ENCODE measurements at regions of chr5 and their contacts with region 1.

Region 1: DNA sequence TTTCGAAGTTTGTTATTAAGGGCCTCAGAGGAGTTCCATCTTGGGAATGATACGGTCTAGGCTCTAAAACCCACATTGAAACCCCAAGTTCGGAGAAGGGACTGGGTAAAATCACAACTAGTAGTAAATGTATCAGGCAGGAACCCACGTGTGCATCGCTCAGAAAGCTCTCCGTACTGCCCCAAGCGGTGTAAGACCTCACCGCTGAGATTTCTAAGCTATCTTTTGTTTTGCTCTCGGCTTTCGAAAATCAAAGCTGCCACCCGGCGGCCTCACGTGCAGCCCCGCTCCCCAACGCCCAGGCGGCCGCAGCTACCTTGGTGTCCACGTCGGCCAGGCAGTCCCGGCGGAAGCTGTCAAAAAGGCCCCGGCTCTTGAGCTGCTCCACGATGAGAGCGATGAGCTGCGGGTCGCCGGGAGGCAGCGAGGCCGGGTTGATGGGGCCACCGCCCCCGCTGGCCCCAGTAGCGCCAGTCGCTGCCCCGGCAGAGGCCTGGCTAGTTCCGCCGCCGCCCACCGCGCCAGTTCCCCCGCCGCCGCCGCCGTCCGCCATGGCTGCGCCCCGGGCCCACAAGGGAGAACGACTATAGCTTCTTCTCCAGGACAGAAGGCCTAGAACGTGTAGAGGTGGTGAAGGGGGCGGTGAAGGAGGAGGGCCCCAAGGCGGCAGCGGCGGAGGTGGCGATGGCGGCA is 420 bp downstream of the BOD1 start:
- DNase-seq: peak; percentile 31
- H3K4me3 ChIP-seq: peak overlapping the region; percentile 87
- CTCF ChIP-seq: peak; percentile 72

Region 2: DNA sequence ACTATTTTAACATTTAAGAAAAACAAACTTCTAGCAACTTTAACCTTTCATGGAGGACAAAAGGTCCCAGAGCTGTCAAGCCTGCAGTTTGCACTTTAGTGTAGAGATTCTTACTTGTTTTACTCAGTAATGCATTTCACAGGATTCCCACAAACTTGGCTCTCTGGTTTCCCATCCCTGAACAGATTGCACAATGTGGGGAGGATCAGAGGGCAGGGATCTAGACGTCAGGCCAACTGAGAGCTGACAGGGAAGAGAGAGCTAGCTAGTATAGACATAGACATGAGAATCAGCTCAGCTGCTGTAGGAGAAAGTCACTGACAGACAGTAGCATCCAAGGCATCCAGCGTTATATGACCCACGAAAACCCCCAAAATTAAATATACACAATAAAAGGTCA is 492.6 kb before region 1 on chr5:
- CTCF ChIA-PET with region 1: no interaction called
- POLR2A ChIA-PET with region 1: no interaction called
- DNase-seq: peak; percentile 31
- H3K4me3 ChIP-seq: no peak overlapping the region
- CTCF ChIP-seq: no peak

Region 3: DNA sequence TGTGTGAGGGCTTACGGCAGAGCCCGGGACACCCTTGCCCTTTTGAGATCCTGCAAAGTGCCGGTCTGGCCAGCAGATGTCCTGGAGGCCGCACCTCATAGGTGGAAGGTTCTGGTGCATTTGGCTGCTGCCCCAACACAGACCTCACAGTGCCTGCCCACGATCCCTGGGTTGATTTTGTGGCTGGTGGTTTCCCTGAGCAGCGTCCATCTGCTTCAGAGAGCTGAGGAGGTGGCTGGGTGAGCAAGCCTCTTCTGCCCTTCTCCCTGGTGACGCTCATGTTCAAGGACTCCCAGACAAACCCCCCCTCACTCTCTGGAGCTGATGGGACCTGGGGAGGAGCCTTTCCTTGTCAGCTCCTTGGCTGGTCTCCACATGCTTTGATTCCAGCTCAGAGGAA is 452.8 kb before region 1 on chr5:
- CTCF ChIA-PET with region 1: no interaction called
- POLR2A ChIA-PET with region 1: no interaction called
- DNase-seq: no peak
- H3K4me3 ChIP-seq: no peak overlapping the region
- CTCF ChIP-seq: no peak

Region 4: DNA sequence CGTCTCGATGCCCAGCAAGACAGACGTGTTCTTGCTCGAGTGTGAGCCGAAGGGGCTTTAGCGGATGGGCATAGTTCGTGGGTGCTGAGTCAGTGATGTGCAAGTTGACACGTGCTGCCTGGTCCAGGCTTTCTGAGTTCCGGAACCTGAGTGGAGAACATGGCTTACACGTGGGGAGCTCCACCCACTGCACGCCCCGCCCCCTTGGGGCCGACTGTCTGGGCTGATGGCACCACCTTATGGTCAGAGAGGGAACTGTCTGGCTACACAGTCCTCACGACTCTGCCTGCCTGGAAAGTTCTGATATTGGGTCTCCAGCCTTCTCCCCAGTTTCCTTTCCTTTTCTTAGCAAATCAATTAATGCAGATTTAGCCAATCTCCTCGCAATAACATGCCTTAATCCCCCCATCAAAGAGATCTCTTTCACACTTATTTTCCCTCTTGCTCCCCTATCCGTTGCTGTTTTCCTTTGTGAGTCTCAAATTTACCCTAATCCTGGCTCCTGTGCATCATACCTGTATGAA is 284.0 kb before region 1 on chr5:
- CTCF ChIA-PET with region 1: interaction called, 18 read pairs
- POLR2A ChIA-PET with region 1: interaction called, 5 read pairs
- DNase-seq: no peak
- H3K4me3 ChIP-seq: no peak overlapping the region
- CTCF ChIP-seq: peak; percentile 93

Region 5: GRCh38 chr5:173602423-173602822 is 13.6 kb before region 1 on chr5:
- CTCF ChIA-PET with region 1: interaction called, 25 read pairs
- POLR2A ChIA-PET with region 1: interaction called, 4 read pairs
- DNase-seq: peak; percentile 44
- H3K4me3 ChIP-seq: no peak overlapping the region
- CTCF ChIP-seq: no peak

Region 6: GRCh38 chr5:173733831-173734501 is 117.9 kb after region 1 on chr5:
- CTCF ChIA-PET with region 1: no interaction called
- POLR2A ChIA-PET with region 1: no interaction called
- DNase-seq: no peak
- H3K4me3 ChIP-seq: no peak overlapping the region
- CTCF ChIP-seq: no peak

Region 7: GRCh38 chr5:173888473-173889131 is 272.6 kb after region 1 on chr5:
- CTCF ChIA-PET with region 1: interaction called, 13 read pairs
- POLR2A ChIA-PET with region 1: no interaction called
- DNase-seq: no peak
- H3K4me3 ChIP-seq: peak overlapping the region; percentile 62
- CTCF ChIP-seq: no peak

Region 8: GRCh38 chr5:173972925-173973615 is 357.0 kb after region 1 on chr5:
- CTCF ChIA-PET with region 1: interaction called, 402 read pairs
- POLR2A ChIA-PET with region 1: interaction called, 3 read pairs
- DNase-seq: no peak
- H3K4me3 ChIP-seq: peak overlapping the region; percentile 48
- CTCF ChIP-seq: peak; percentile 87

Region 9: DNA sequence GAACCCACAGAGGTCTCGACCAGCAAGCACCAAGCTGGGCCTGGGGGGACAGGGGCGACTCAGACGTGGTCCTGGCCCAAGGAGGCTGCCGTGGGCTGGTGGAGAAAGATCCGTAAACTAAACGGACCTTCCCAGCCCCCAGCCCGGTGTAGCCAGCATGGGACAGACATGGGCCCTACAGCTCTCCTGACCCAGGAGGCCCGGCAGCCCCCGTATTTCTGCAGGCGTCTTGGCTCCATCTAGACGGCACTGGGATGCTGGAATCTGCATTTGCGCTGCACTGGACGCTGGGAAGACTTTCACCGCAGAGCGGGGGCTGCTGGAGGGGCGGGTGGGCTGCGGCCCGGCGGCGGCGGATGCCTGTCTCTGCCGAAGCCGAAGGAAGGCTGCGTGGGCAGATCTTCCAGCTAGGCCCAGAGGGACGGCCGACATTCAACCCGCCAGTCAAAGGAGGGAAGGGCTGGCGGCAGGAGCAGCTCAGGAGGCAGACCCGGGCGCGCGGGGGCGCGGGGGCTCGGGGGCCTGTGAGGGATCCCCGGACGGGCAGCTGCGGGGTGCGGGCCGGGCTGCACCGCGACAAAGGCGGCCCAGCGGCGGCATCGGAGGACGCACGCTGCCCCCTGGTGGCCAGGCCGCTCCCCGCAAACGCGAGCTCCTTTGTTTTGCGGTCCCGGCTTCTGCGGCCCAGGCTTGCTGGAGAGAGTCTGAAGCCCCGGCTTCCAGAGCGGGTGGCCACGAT is 695.7 kb after region 1 on chr5:
- CTCF ChIA-PET with region 1: interaction called, 58 read pairs
- POLR2A ChIA-PET with region 1: no interaction called
- DNase-seq: no peak
- H3K4me3 ChIP-seq: peak overlapping the region; percentile 49
- CTCF ChIP-seq: peak; percentile 90

Measured in AG04449 (cell line).